PC-9 (cell line): ENCODE measurements at regions of chr1 and their contacts with region 1.

Region 1: DNA sequence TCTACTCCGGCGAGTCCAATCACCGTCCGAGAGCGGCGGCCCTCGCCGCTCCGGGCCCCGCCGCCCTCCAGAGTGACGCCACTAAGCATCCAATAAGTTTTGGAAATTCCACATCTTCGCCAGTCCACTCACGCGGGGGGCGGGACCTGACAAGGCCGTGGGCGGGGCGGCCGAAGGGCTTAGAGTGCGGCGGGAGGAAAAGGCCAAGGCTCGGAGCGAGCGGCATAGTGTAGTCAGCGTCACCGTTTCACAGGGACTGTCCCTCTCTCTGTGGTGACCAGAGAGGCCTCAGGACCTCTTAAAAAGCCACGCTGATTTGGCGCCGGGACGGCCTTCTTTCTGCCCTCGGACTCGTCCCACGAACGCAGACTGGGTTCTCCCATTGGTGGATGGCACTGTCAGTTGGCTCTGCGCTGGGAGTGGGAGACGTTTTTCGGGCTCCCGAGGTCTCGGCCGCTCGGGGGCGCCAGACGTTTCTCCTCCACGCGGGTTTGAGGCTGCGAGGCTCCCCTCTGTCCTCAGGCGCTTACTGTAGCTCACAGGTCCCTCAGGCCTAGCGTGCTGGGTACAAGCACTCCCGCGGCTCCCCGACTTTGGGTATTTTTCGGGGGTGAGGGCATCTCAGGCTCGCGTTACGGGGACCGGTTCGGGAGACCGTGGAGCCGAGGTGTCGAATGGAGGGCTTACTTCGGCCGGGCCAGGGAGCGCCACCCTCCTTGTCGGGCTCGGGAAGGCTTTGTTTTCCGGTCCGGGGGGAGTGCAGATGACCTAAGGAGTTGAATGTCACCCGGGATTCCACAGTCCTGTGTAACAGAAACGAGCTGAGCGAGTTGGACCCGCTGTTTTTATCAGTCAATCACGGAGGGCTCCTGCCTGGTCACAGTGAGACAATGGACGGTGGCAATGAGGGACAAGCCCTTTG is 488 bp upstream of the TRIM45 start:
- DNase-seq: peak; percentile 95 to 98
- H3K4me3 ChIP-seq: peak overlapping the region; percentile 62; the same call in 1 of the 2 replicates
- H3K27ac ChIP-seq: peak overlapping the region; percentile 23; the same call in 1 of the 2 replicates
- H3K4me1 ChIP-seq: peaks cover 7% of the 10 kb centered on the region
- H3K27me3 ChIP-seq: no peaks in the 10 kb centered on the region
- CTCF ChIP-seq: peak; percentile 83

Region 2: GRCh38 chr1:117093870-117094621 is 28.0 kb before region 1 on chr1:
- CTCF ChIA-PET with region 1: interaction called, 14 read pairs
- POLR2A ChIA-PET with region 1: interaction called, 7 read pairs
- intact Hi-C with region 1: no loop called
- DNase-seq: peak; percentile 31 to 47
- H3K4me3 ChIP-seq: no peak overlapping the region
- H3K27ac ChIP-seq: peak overlapping the region; percentile 35
- H3K4me1 ChIP-seq: peaks cover 13% of the 10 kb centered on the region; the same call in 1 of the 2 replicates
- H3K27me3 ChIP-seq: no peaks in the 10 kb centered on the region
- CTCF ChIP-seq: peak; percentile 65

Region 3: DNA sequence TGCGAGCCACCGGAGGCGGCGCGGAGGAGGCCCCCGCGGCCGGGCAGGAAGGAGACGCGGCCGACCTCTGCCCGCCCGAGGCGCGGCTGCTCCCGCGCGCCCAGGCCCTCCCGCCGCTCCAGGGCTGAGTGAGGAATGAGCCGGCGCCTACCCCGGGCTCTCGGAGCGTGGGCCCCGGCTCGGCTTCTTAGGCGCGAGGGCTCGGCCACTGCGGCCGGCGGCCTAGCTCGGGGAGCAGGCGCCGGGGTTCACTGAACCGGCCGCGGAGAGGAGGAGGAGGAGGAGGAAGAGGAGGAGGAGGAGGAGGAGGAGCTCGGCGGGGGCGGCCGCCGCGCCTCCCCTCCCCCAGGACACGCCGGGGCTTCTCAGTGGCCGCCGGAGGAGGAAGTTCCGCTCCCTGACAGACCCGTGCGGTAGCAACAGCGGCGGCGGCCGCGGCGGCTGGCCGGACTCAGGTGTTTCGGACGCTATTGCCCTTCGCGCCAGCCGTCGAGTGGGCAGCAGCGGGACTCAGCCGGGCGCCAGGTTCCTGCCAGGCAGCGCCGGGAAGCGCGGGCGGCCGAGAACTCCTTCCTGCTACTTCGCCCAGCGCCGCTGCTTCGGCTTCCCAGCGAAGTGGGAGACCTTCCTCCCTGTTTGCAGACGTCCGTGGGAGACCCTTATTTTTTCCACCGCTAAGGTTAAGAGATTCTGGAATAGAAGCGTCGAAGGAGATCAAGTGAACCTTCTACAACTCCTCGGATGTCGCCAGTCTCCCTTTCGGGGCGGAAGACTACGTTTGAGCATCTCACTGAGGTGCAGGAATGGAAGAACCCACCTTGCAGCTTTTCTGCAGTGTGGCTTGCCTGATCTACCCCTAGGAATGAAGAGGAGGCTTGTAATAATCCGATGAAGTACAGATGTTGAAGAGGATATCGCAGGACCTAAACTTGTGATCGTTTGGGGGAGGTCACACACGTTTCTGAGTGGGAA is 245.3 kb after region 1 on chr1 and contains the start of gene MAN1A2:
- CTCF ChIA-PET with region 1: no interaction called
- POLR2A ChIA-PET with region 1: interaction called, 6 read pairs
- intact Hi-C with region 1: loop called (anchors 10 kb)
- DNase-seq: peak; percentile 85 to 96
- H3K4me3 ChIP-seq: peak within 1 kb of the TSS; percentile 66
- H3K27ac ChIP-seq: peak within 1 kb of the TSS; percentile 77
- H3K4me1 ChIP-seq: peaks cover 61% of the 10 kb centered on the region
- H3K27me3 ChIP-seq: no peaks in the 10 kb centered on the region
- CTCF ChIP-seq: no peak
- total RNA-seq, gene MAN1A2: 39.8 and 50.3 TPM in 2 replicates